ENCODE measurements at regions of chr3 and their contacts with region 1.

Region 1: DNA sequence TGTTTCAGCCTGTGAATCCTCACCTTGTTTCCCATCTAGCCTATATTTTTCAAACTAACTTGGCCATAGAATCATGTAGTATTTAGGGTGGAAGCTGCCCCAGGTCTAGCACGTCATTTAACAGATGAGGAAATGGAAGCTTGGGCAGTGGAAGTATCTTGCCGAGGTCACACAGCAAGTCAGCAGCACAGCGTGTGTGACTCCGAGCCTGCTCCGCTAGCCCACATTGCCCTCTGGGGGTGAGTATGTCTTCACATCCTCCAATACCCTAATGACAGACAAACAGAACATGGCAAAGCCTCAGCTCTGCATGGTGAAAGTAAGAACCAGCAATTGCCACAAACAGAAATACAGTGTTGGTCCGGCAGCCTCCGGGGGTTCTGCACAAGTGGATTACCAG is 2.2 kb upstream of the CCR5 start:
- DNase-seq: peak; percentile 86
- H3K4me3 Mint-ChIP-seq: peak overlapping the region; percentile 1
- H3K27ac Mint-ChIP-seq: peak overlapping the region; percentile 59
- H3K4me1 Mint-ChIP-seq: peaks cover 80% of the 10 kb centered on the region
- H3K27me3 Mint-ChIP-seq: peaks cover 10% of the 10 kb centered on the region

Region 2: GRCh38 chr3:46070595-46071093 is 297.9 kb before region 1 on chr3:
- CTCF ChIA-PET with region 1: interaction called, 84 read pairs
- POLR2A ChIA-PET with region 1: interaction called, 13 read pairs
- DNase-seq: no peak
- H3K4me3 Mint-ChIP-seq: peak overlapping the region; percentile 22
- H3K27ac Mint-ChIP-seq: peak overlapping the region; percentile 71
- H3K4me1 Mint-ChIP-seq: peaks cover 65% of the 10 kb centered on the region
- H3K27me3 Mint-ChIP-seq: peaks cover 49% of the 10 kb centered on the region

Region 3: DNA sequence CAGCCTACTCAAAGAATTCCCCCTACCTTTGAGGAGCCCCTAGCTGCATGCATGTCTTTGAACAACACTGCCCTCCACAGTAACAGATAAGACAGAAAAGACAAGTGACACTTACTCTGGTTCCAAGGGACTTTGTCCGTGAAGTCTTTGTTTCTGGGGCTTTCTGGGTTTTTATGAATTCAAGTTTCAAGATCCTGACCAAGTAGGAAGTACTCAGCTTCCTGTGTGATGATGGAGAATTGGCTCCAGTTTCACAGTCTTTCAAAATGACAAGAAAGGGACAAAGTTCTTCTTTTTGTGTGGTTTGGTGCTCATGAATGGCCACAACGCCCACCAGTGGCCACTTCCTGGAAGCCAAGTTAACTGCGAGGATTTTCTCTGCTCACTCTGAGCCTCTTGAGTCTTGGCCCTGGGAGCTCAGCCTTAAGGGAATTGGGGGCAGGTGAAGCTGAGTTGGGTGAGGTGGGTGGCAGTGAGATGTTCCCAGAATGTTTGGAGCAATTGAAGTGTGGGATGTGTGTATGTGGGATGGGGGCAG is 160.3 kb before region 1 on chr3 and contains the start of gene CCR1:
- CTCF ChIA-PET with region 1: interaction called, 135 read pairs
- POLR2A ChIA-PET with region 1: interaction called, 101 read pairs
- DNase-seq: peak; percentile 78
- H3K4me3 Mint-ChIP-seq: peak within 1 kb of the TSS; percentile 71
- H3K27ac Mint-ChIP-seq: peak within 1 kb of the TSS; percentile 75
- H3K4me1 Mint-ChIP-seq: peaks cover 54% of the 10 kb centered on the region
- H3K27me3 Mint-ChIP-seq: no peaks in the 10 kb centered on the region
- total RNA-seq, gene CCR1: 20.0 to 20.7 TPM

Region 4: DNA sequence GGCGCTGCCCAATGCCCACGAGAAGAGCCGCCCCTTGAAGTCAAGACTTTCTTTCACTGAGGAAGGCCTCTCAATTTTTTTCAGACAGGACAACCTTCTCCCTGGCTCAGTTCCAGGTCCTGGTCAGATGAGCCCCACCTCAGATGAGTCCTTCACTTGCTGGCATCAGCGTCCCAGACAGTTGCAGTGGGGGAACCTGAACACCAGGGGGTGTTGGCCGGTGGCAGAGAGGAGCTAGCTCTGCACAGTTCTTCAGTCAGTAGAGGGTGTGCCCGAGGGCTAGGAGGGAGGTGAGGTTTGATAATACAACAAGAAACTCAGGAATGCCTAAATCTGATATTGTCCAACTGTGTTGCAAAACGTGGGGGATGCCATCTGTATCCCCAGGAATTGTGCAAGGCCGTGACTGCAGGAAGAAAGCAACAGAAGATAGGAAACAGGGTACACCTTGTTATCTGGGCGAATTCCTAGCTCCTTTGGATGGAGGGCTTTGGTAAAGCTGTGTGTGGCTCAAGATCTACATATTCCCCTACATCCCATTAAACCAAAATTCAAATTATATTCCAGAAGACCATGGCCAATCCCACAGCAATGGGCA is 92.0 kb before region 1 on chr3:
- CTCF ChIA-PET with region 1: interaction called, 184 read pairs
- POLR2A ChIA-PET with region 1: interaction called, 104 read pairs
- DNase-seq: peak; percentile 85
- H3K4me3 Mint-ChIP-seq: no peak overlapping the region
- H3K27ac Mint-ChIP-seq: peak overlapping the region; percentile 41
- H3K4me1 Mint-ChIP-seq: peaks cover 57% of the 10 kb centered on the region
- H3K27me3 Mint-ChIP-seq: peaks cover 36% of the 10 kb centered on the region

Region 5: DNA sequence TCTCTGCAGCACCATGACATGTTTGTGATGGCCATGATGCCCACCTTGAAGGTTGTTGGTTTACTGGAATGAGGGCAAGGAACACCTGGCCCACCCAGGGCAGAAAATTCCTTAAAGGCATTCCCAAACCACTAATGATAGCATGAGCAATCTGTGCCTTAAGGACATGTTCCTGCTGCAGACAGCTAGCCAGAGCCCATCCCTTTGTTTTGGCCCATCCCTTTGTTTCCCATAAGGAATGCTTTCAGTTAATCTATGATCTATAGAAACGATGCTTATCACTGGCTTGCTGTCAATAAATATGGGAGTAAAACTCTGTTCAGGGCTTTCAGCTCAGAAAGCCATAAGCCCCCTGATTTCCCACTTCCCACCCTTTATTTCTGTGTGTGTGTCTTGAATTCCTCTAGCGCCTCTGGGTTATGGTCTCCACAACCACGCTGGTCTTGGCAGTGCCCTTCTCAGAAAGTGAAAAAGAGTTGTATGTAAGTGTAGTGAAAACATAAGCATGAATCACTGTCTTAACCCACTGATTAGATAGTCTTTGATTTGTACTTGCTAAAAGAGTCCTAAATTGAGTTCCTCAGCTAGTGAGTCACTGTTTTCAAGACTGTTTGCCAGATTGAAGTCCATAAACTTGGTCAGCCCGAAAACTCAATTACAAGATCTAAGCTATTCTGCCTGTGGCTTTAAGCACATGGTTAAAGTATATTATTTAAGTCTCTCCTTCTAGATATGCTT is 33.7 kb before region 1 on chr3:
- CTCF ChIA-PET with region 1: interaction called, 10 read pairs
- POLR2A ChIA-PET with region 1: interaction called, 4 read pairs
- DNase-seq: no peak
- H3K4me3 Mint-ChIP-seq: no peak overlapping the region
- H3K27ac Mint-ChIP-seq: no peak overlapping the region
- H3K4me1 Mint-ChIP-seq: peaks cover 31% of the 10 kb centered on the region
- H3K27me3 Mint-ChIP-seq: peaks cover 28% of the 10 kb centered on the region

Region 6: GRCh38 chr3:46909535-46910442 is 541.2 kb after region 1 on chr3:
- CTCF ChIA-PET with region 1: no interaction called
- POLR2A ChIA-PET with region 1: no interaction called
- DNase-seq: peak; percentile 84
- H3K4me3 Mint-ChIP-seq: no peak overlapping the region
- H3K27ac Mint-ChIP-seq: no peak overlapping the region
- H3K4me1 Mint-ChIP-seq: peaks cover 20% of the 10 kb centered on the region
- H3K27me3 Mint-ChIP-seq: no peaks in the 10 kb centered on the region

Measured in activated CD4-positive, alpha-beta memory T cell treated with anti-CD3 and anti-CD28 coated beads, Interleukin-2, amount 10 ng/mL, durations not matched to agents 7 days and 5 days (primary cell).